Mammary epithelial cell (primary cell): ENCODE measurements at regions of chr11 and their contacts with region 1.

Region 1: GRCh38 chr11:103682318-103683184 is 353.9 kb upstream of the DDI1 start:
- DNase-seq: peak; percentile 59
- H3K4me3 ChIP-seq: no peak overlapping the region
- H3K27ac ChIP-seq: no peak overlapping the region
- H3K4me1 ChIP-seq: no peaks in the 10 kb centered on the region
- H3K27me3 ChIP-seq: no peaks in the 10 kb centered on the region
- CTCF ChIP-seq: peak; percentile 87 to 89

Region 2: GRCh38 chr11:103875855-103876510 is 193.4 kb after region 1 on chr11:
- CTCF ChIA-PET with region 1: no interaction called
- dilution Hi-C with region 1: no loop called
- in situ Hi-C with region 1: loop called in 1 of 2 experiments (anchors 25 kb)
- intact Hi-C with region 1: no loop called
- DNase-seq: no peak
- H3K4me3 ChIP-seq: no peak overlapping the region
- H3K27ac ChIP-seq: no peak overlapping the region
- H3K4me1 ChIP-seq: no peaks in the 10 kb centered on the region
- H3K27me3 ChIP-seq: no peaks in the 10 kb centered on the region
- CTCF ChIP-seq: no peak

Region 3: DNA sequence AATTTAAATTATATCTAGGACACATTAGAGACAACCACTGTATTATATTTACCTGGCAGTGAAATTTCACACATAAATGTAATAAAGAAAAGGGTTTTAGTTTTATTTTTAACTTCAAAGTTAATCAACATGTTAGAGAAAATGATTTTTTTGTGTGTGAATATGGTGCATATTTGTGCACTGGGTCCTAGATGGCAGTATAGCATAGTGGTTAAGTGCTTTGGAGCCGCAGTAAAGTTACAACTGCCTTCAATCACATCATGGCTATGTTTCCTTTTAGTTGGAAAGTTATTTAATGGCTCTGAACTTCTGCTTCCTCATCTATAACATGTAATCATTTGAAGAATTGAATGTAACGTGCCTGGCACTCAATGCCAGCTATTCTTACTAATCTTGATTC is 245.0 kb after region 1 on chr11:
- CTCF ChIA-PET with region 1: no interaction called
- dilution Hi-C with region 1: no loop called
- in situ Hi-C with region 1: no loop called
- intact Hi-C with region 1: loop called (anchors 1 kb)
- DNase-seq: peak; percentile 15
- H3K4me3 ChIP-seq: no peak overlapping the region
- H3K27ac ChIP-seq: no peak overlapping the region
- H3K4me1 ChIP-seq: peaks cover 12% of the 10 kb centered on the region
- H3K27me3 ChIP-seq: no peaks in the 10 kb centered on the region
- CTCF ChIP-seq: peak; percentile 59 to 69

Region 4: DNA sequence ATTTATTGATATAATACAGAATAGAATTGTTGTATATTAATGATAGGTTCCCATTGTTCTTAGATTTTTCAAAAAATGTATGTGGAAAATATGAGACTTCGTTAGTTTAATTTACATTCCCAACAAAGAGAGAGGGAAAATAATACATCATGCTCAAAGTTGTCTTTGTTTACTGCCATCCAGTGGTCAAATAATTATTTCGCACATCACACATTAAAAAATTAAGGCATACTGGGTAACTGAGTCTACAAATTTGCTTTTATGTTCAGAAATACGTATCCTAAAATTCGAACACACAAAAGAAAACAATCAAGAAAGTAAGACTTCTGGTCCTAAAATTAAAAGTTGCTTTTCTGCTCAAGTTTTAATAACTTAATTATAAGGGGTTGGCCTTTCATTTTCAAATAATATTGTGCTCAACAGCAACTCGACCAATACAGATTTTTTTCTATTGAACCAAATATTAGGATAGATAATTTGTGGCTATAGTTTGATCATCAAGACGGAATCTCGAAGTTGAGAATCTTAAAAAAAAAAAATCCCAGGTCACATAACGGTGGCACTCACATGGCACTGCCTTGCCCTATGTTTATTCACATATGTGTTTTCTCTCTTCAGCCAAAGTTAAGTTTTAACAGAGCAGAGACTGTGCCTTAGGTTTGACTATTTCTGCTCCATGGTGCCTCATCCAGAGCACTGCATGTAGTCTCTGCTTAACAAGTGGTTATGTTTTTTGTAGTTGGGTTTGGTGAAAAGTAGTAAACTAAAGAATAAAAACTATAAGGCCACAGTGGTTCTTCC is 469.1 kb after region 1 on chr11:
- CTCF ChIA-PET with region 1: interaction called, 3 read pairs
- dilution Hi-C with region 1: no loop called
- in situ Hi-C with region 1: loop called (anchors 10 kb)
- intact Hi-C with region 1: loop called (anchors 1 kb)
- DNase-seq: no peak
- H3K4me3 ChIP-seq: no peak overlapping the region
- H3K27ac ChIP-seq: no peak overlapping the region
- H3K4me1 ChIP-seq: no peaks in the 10 kb centered on the region
- H3K27me3 ChIP-seq: no peaks in the 10 kb centered on the region
- CTCF ChIP-seq: peak; percentile 44

Region 5: DNA sequence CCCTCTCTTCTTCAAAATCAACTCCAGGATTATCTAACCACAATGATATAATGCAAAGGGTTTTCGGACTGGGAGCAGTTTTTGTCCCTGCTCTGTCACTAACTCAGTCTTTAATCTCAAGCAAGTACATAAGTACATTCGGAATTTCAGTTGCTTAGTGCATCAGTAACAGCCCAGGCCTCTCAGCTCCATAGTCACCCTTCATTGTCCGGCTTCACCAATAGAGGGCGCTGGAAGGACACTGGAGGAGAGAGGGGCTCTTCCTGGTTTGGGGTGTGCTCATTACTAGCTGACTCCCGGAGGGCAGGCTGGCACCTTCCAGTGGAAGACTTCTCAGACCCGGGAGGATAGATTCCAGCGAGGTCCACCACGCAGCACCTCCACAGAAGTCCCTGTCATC is 571.8 kb after region 1 on chr11:
- CTCF ChIA-PET with region 1: no interaction called
- dilution Hi-C with region 1: no loop called
- in situ Hi-C with region 1: no loop called
- intact Hi-C with region 1: loop called (anchors 2 kb)
- DNase-seq: peak; percentile 33
- H3K4me3 ChIP-seq: no peak overlapping the region
- H3K27ac ChIP-seq: no peak overlapping the region
- H3K4me1 ChIP-seq: no peaks in the 10 kb centered on the region
- H3K27me3 ChIP-seq: no peaks in the 10 kb centered on the region
- CTCF ChIP-seq: peak; percentile 82 to 83

Region 6: GRCh38 chr11:104979849-104980248 is 1297.3 kb after region 1 on chr11:
- CTCF ChIA-PET with region 1: no interaction called
- dilution Hi-C with region 1: no loop called
- in situ Hi-C with region 1: no loop called
- intact Hi-C with region 1: no loop called
- DNase-seq: no peak
- H3K4me3 ChIP-seq: no peak overlapping the region
- H3K27ac ChIP-seq: no peak overlapping the region
- H3K4me1 ChIP-seq: no peaks in the 10 kb centered on the region
- H3K27me3 ChIP-seq: no peaks in the 10 kb centered on the region
- CTCF ChIP-seq: no peak